BJ (cell line): ENCODE measurements at regions of chr15 and their contacts with region 1.

Region 1: DNA sequence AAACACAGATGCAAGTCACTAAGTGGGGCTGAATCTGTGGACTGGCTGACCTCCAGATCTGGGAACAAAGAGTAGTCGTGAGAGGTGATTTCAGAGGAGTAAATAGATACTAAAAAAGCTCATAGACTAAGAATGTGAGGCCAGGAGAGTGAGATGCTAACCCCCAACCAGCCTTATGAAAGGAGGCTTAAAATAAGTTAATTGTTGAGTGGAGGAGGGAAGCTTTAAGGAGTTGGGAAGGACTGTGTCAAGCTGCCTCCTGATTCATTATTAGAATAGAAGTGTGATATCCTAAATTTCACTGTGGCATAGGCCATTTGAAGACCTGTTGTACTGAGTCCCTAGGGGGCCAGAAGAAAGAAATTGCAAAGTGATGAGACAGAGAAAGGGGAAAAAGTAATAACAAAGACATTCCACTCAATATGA is 107.6 kb downstream of the RBPMS2 start:
- DNase-seq: peak; percentile 28
- H3K4me3 ChIP-seq: no peak overlapping the region
- H3K27me3 ChIP-seq: no peaks in the 10 kb centered on the region
- CTCF ChIP-seq: no peak

Region 2: DNA sequence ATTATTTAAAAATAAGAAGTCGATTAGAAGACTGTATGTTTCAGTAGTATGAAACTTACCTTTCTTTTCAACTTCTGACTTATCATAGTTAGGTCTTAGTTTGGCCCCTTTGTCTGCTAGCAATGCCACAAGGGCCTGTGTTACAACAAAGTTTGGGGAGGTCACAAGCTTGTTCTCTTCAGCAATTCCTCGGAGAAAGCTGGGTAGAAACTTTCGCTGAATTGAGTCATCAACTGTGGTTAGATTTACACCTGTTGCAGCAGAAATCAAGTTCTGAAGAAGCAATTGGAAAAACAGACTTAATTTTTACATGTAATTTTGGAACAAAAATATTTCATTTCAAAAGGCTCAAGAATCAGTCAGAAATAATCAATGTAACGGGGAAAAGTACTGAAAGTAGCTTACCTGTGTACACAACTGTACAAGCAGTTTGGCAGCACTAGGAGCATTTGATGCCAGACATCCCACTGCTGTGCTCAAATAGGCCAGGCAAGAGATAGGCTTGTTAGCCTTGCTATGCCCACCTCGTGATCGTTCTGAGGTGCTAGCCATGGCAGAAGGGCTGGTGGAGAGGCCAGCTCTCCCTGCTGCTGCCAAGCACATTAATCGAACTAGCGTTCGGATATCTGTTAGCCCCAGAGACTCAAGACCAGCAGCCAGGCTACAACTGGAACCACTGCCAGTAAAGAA is 1011.9 kb before region 1 on chr15:
- CTCF ChIA-PET with region 1: no interaction called
- POLR2A ChIA-PET with region 1: no interaction called
- DNase-seq: no peak
- H3K4me3 ChIP-seq: no peak overlapping the region
- H3K27me3 ChIP-seq: no peaks in the 10 kb centered on the region
- CTCF ChIP-seq: no peak

Region 3: GRCh38 chr15:64597477-64597822 is 70.3 kb before region 1 on chr15:
- CTCF ChIA-PET with region 1: no interaction called
- POLR2A ChIA-PET with region 1: interaction called, 11 read pairs
- DNase-seq: no peak
- H3K4me3 ChIP-seq: no peak overlapping the region
- H3K27me3 ChIP-seq: no peaks in the 10 kb centered on the region
- CTCF ChIP-seq: no peak

Region 4: GRCh38 chr15:64717735-64718495 is 50.2 kb after region 1 on chr15:
- CTCF ChIA-PET with region 1: no interaction called
- POLR2A ChIA-PET with region 1: no interaction called
- DNase-seq: no peak
- H3K4me3 ChIP-seq: no peak overlapping the region
- H3K27me3 ChIP-seq: no peaks in the 10 kb centered on the region
- CTCF ChIP-seq: no peak